ENCODE measurements at regions of chr19 and their contacts with region 1.

Region 1: DNA sequence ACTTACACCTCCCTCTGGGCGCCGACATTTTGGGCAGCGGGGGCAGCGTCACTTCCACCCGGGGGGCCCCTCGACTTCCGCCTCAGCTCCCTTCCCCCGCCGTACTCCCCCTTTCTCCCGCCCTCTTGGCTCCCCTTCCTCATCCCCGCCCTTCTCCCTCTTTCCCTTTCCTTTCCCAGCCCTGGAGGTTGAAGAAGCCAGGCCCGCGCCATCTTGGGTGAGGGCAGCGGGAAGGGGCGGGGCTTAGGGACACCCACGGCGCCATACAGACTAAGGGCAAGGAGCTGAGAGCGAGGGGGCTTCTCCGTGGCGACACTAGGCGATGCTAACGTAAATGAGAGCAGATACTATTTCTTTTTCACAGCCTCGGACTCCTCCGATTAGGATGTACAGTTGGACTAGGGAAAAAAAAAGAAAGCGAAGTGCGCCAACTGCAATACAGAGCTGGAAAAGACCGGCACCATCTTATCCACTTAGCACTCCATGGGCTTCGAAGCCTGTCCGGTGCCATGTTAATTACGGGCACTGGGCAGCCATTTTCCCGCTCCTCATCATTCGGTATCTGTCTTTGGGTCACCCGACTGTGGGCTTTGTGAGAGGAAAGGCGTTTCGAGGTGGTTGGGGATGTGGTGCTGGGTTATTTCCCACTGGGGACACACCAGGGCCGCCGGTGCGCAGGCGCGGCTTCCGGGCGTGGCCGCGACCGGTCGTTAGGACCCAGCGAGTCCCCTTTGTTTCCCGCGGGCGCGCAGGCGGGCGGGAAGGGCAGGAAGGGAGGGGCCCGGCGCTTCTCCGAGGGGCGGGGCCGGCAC is at the start of gene FIZ1:
- DNase-seq: peak; percentile 98
- ATAC-seq: peak; percentile 86
- H3K4me3 ChIP-seq: peak within 1 kb of the TSS; percentile 73 to 94 (median 90)
- H3K27ac ChIP-seq: peak within 1 kb of the TSS; percentile 98
- H3K4me1 ChIP-seq: peaks cover 39% of the 10 kb centered on the region
- H3K27me3 ChIP-seq: no peaks in the 10 kb centered on the region; a peak in 1 of 5 replicates
- CTCF ChIP-seq: no peak
- EP300 ChIP-seq: no peak
- POLR2A ChIP-seq: peak; percentile 10 to 50; a peak in 2 of 4 replicates
- RAD21 ChIP-seq: peak; percentile 30; the same call in 1 of the 2 replicates
- total RNA-seq, gene FIZ1: 3.4 and 5.9 TPM in 2 replicates

Region 2: GRCh38 chr19:55503502-55504251 is 96.0 kb before region 1 on chr19:
- CTCF ChIA-PET with region 1: no interaction called
- POLR2A ChIA-PET with region 1: interaction called, 10 read pairs
- in situ Hi-C with region 1: no loop called
- intact Hi-C with region 1: no loop called
- DNase-seq: peak; percentile 64
- ATAC-seq: peak; percentile 91
- H3K4me3 ChIP-seq: peak overlapping the region in 2 of 3 experiments; percentile 39 to 54; a peak in 3 of 6 replicates
- H3K27ac ChIP-seq: no peak overlapping the region
- H3K4me1 ChIP-seq: peaks cover 19% of the 10 kb centered on the region
- H3K27me3 ChIP-seq: peaks cover 3 to 41% of the 10 kb centered on the region in 2 experiments; a peak in 4 of 5 replicates
- CTCF ChIP-seq: peak; percentile 99
- EP300 ChIP-seq: no peak
- POLR2A ChIP-seq: no peak
- RAD21 ChIP-seq: peak; percentile 96

Region 3: DNA sequence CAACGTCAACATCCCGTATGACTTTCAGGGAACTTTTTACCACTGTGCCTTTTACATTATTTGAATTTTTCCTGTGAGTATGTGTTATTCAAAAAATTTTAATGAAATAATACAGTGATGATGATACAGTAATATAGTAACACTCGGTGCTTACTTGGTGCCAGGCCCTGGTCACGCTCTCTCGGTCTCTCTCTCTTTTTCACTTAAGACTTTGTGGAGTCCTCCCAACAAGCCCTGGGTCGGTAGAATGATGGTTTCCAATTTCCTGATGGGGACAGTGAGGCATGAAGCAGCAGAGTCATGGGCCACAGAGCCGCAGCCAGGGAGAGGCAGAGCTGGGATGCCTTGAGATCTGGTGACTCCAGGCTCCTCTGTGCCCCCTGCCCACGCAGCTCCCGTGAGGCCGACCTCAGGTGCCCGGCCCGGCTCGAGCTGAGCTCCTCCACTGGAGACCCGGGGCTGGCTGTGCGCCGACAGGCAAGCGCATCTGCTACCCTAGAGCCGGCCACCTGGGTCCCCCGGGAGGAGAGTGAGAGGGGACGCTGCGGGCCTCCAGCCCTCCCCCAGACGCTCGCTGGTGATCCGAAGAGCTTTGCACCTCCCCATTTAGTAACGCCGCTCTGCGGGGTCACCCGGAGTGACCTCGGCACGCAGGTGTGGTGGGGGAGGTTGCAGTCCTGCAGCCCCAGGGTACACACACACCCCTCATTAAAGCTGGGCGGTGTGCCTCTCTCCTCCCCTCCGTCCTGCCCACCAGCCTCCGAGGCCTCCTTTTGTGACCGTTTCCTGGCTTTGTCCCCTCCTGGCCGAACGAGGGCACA is 50.0 kb before region 1 on chr19:
- CTCF ChIA-PET with region 1: no interaction called
- POLR2A ChIA-PET with region 1: interaction called, 18 read pairs
- in situ Hi-C with region 1: no loop called
- intact Hi-C with region 1: loop called (anchors 10 kb)
- DNase-seq: peak; percentile 64
- ATAC-seq: peak; percentile 32
- H3K4me3 ChIP-seq: peak overlapping the region; percentile 55 to 80 (median 66)
- H3K27ac ChIP-seq: peak overlapping the region; percentile 47
- H3K4me1 ChIP-seq: peaks cover 79% of the 10 kb centered on the region
- H3K27me3 ChIP-seq: no peaks in the 10 kb centered on the region; a peak in 1 of 5 replicates
- CTCF ChIP-seq: 0 out of 2 replicates have a peak, but pooled peaks have one; percentile 28
- EP300 ChIP-seq: no peak
- POLR2A ChIP-seq: no peak
- RAD21 ChIP-seq: no peak

Region 4: GRCh38 chr19:55586976-55587668 is 12.6 kb before region 1 on chr19:
- CTCF ChIA-PET with region 1: no interaction called
- POLR2A ChIA-PET with region 1: interaction called, 66 read pairs
- in situ Hi-C with region 1: no loop called
- intact Hi-C with region 1: loop called (anchors 2 kb)
- DNase-seq: peak; percentile 93
- ATAC-seq: peak; percentile 86
- H3K4me3 ChIP-seq: peak overlapping the region; percentile 25 to 88 (median 51)
- H3K27ac ChIP-seq: peak overlapping the region; percentile 41
- H3K4me1 ChIP-seq: peaks cover 34% of the 10 kb centered on the region
- H3K27me3 ChIP-seq: no peaks in the 10 kb centered on the region; a peak in 1 of 5 replicates
- CTCF ChIP-seq: no peak
- EP300 ChIP-seq: no peak
- POLR2A ChIP-seq: no peak
- RAD21 ChIP-seq: no peak

Region 5: GRCh38 chr19:55632463-55632834 is 32.8 kb after region 1 on chr19:
- CTCF ChIA-PET with region 1: no interaction called
- POLR2A ChIA-PET with region 1: interaction called, 13 read pairs
- in situ Hi-C with region 1: no loop called
- intact Hi-C with region 1: no loop called
- DNase-seq: peak; percentile 88
- ATAC-seq: peak; percentile 63
- H3K4me3 ChIP-seq: no peak overlapping the region
- H3K27ac ChIP-seq: no peak overlapping the region
- H3K4me1 ChIP-seq: peaks cover 38% of the 10 kb centered on the region
- H3K27me3 ChIP-seq: no peaks in the 10 kb centered on the region; a peak in 1 of 5 replicates
- CTCF ChIP-seq: peak; percentile 85
- EP300 ChIP-seq: no peak
- POLR2A ChIP-seq: no peak
- RAD21 ChIP-seq: no peak; the same call in 1 of the 2 replicates